CD4-positive, alpha-beta memory T cell (primary cell): ENCODE measurements at regions of chr2 and their contacts with region 1.

Region 1: DNA sequence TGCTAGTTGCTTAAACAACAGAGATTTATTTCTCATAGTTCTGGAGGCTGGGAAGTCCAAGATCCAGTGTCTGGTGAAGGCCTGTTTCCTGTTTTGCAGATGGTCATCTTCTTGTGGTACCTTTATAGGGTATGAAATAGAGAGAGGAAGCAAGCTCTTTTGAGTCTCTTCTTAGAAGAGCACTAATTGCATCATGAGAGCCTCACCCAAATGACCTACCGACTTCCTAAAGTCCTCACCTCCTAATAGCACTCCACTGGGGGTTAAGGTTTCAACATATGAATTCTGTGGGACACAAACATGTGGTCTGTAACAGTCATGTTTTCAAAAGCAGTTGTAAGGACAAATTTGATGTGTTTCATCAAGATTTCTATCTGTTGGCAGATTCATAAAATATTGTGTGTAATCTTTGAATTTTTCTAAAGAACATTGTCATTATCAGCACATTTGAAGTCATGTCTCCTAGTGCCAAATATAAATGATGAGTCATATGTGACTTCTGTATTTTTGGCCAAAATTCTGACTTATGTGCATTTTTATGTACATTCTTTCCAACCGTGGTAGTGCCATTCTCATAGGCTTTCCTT is 45.3 kb downstream of the CD28 start:
- DNase-seq: no peak
- H3K4me3 ChIP-seq: no peak overlapping the region
- H3K4me3 Mint-ChIP-seq: peak overlapping the region in 5 of 8 donors; percentile 15 to 63 (median 32)
- H3K27ac ChIP-seq: no peak overlapping the region
- H3K27ac Mint-ChIP-seq: peak overlapping the region in 5 of 7 donors; percentile 34 to 80 (median 54)
- H3K4me1 ChIP-seq: peaks cover 47% of the 10 kb centered on the region
- H3K4me1 Mint-ChIP-seq: peaks cover 42 to 69% (median 56%) of the 10 kb centered on the region in 4 donors
- H3K27me3 ChIP-seq: no peaks in the 10 kb centered on the region
- H3K27me3 Mint-ChIP-seq: no peaks in the 10 kb centered on the region

Region 2: GRCh38 chr2:203730076-203730729 is 21.6 kb before region 1 on chr2:
- CTCF ChIA-PET with region 1: interaction called, 4 read pairs
- POLR2A ChIA-PET with region 1: interaction called, 185 read pairs
- intact Hi-C with region 1: no loop called
- DNase-seq: no peak
- H3K4me3 ChIP-seq: no peak overlapping the region
- H3K4me3 Mint-ChIP-seq: peak overlapping the region; percentile 31 to 82 (median 70)
- H3K27ac ChIP-seq: peak overlapping the region; percentile 30
- H3K27ac Mint-ChIP-seq: peak overlapping the region; percentile 76 to 92 (median 88)
- H3K4me1 ChIP-seq: peaks cover 94% of the 10 kb centered on the region
- H3K4me1 Mint-ChIP-seq: peaks cover 76 to 95% (median 85%) of the 10 kb centered on the region in 4 donors
- H3K27me3 ChIP-seq: no peaks in the 10 kb centered on the region
- H3K27me3 Mint-ChIP-seq: no peaks in the 10 kb centered on the region

Region 3: GRCh38 chr2:203763938-203764664 is 12.3 kb after region 1 on chr2:
- CTCF ChIA-PET with region 1: interaction called, 9 read pairs
- POLR2A ChIA-PET with region 1: interaction called, 27 read pairs
- intact Hi-C with region 1: loop called (anchors 2 kb)
- DNase-seq: peak in 1 of 5 donors; percentile 15
- H3K4me3 ChIP-seq: no peak overlapping the region
- H3K4me3 Mint-ChIP-seq: peak overlapping the region in 7 of 8 donors; percentile 4 to 59 (median 44)
- H3K27ac ChIP-seq: no peak overlapping the region
- H3K27ac Mint-ChIP-seq: peak overlapping the region; percentile 61 to 87 (median 80)
- H3K4me1 ChIP-seq: peaks cover 68% of the 10 kb centered on the region
- H3K4me1 Mint-ChIP-seq: peaks cover 50 to 78% (median 66%) of the 10 kb centered on the region in 4 donors
- H3K27me3 ChIP-seq: no peaks in the 10 kb centered on the region
- H3K27me3 Mint-ChIP-seq: no peaks in the 10 kb centered on the region